PC-3 (cell line): ENCODE measurements at regions of chr3 and their contacts with region 1.

Region 1: DNA sequence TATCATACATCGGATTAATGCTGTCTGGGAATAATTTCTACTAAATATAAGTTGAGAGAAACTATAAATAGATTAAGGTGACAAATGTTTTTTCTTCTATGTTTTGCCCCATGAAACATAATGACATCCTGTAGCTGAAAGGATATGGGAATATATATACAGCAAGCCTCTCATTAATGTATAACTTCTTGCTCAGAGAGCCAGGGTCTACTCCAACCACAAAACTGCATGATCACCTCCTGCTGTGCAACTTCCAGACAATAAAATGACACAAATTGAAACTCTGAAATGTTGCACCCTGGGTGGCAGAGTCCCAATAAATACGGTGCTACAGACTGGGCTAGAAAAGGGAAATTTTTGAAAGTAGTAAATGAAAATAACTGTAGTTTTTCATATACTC is 571.9 kb upstream of the CBLB start:
- DNase-seq: no peak
- ATAC-seq: no peak
- H3K4me3 ChIP-seq: no peak overlapping the region
- H3K27ac ChIP-seq: no peak overlapping the region
- H3K4me1 ChIP-seq: no peaks in the 10 kb centered on the region
- H3K27me3 ChIP-seq: no peaks in the 10 kb centered on the region
- CTCF ChIP-seq: no peak

Region 2: DNA sequence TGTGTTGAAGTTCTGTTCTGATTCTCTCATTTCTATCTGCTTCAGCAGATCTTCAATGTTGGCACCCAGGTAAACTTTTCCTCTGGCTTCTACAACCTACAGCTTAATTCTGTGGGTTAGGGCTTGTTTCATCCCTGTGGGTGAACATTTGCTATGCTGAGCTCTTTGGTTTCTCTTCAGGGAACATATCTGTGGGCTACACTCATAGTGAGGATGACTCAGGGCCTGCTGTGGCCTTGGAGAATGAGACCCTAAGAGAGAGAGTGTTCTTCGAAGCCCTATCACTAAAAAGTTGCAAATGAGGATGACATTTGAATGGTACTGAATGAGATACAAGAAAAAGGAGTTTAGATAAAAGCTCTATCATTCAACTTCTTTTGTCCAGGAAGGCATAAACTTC is 225.6 kb before region 1 on chr3:
- CTCF ChIA-PET with region 1: no interaction called
- POLR2A ChIA-PET with region 1: no interaction called
- intact Hi-C with region 1: loop called (anchors 10 kb)
- DNase-seq: no peak
- ATAC-seq: no peak
- H3K4me3 ChIP-seq: no peak overlapping the region
- H3K27ac ChIP-seq: no peak overlapping the region
- H3K4me1 ChIP-seq: peaks cover 11% of the 10 kb centered on the region
- H3K27me3 ChIP-seq: no peaks in the 10 kb centered on the region
- CTCF ChIP-seq: no peak

Region 3: DNA sequence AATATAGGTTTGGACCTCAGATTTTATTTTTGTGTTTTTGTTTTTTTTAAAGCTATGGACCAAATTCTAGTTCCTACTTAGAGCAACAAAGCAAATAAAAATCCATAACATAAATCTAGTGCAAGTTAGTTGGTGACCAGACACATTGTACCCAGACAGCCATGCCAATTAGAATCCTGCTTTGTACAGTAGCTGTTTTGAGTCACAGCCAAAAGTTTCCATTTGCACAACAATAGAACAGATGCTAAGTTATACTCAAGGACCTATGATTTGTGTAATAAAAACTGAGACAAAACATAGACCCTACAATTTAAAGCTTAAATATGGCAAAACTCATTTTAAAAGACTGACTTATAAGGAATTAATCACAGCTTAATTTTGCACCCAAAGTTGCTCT is 58.7 kb before region 1 on chr3:
- CTCF ChIA-PET with region 1: no interaction called
- POLR2A ChIA-PET with region 1: no interaction called
- intact Hi-C with region 1: no loop called
- DNase-seq: no peak
- ATAC-seq: no peak
- H3K4me3 ChIP-seq: no peak overlapping the region
- H3K27ac ChIP-seq: no peak overlapping the region
- H3K4me1 ChIP-seq: 0 out of 2 replicates have a peak, but pooled peaks cover 7% of the 10 kb centered on the region
- H3K27me3 ChIP-seq: no peaks in the 10 kb centered on the region
- CTCF ChIP-seq: no peak

Region 4: GRCh38 chr3:106457286-106458180 is 16.9 kb after region 1 on chr3:
- CTCF ChIA-PET with region 1: interaction called, 10 read pairs
- POLR2A ChIA-PET with region 1: no interaction called
- intact Hi-C with region 1: no loop called
- DNase-seq: peak; percentile 96
- ATAC-seq: peak; percentile 100
- H3K4me3 ChIP-seq: no peak overlapping the region
- H3K27ac ChIP-seq: no peak overlapping the region
- H3K4me1 ChIP-seq: peaks cover 8% of the 10 kb centered on the region; the same call in 1 of the 2 replicates
- H3K27me3 ChIP-seq: no peaks in the 10 kb centered on the region
- CTCF ChIP-seq: no peak

Region 5: DNA sequence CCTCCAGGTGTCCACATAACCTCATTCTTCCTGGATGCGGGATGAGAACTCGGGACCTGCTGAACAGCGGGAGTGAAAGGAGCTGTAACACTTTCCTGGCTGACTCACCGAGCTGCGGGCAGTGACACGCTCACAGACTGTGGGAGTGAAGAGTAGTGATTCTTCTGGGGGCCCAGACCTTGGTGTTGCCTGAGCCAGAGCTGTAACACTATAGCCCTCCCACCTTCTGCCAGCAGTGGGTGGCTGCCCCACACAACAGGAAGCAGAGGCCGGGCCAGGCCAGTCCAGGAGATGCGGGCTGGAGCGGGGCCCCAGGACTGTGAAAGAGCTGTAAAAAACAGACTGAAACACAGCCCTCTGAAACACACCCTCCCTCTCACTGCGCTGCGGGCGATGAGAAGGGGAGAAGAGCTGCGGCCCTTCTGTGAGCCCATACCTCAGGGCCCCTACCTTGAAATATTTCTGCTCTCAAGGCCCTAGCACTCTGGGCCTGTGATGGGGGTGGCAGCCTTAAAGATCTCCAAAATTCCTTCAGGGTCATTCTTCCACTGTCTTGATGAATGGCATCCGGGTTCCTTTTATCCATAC is 472.5 kb after region 1 on chr3:
- CTCF ChIA-PET with region 1: no interaction called
- POLR2A ChIA-PET with region 1: no interaction called
- intact Hi-C with region 1: no loop called
- DNase-seq: no peak
- ATAC-seq: no peak
- H3K4me3 ChIP-seq: no peak overlapping the region
- H3K27ac ChIP-seq: no peak overlapping the region
- H3K4me1 ChIP-seq: no peaks in the 10 kb centered on the region
- H3K27me3 ChIP-seq: no peaks in the 10 kb centered on the region
- CTCF ChIP-seq: no peak